A673 (cell line): ENCODE measurements at regions of chr21 and their contacts with region 1.

Region 1: GRCh38 chr21:42117229-42117966 is 46.3 kb downstream of the UMODL1 start:
- DNase-seq: peak; percentile 74
- H3K4me3 ChIP-seq: no peak overlapping the region
- H3K27ac ChIP-seq: no peak overlapping the region
- H3K4me1 ChIP-seq: peaks cover 4% of the 10 kb centered on the region
- H3K27me3 ChIP-seq: no peaks in the 10 kb centered on the region
- CTCF ChIP-seq: peak; percentile 91

Region 2: GRCh38 chr21:41283211-41283818 is 834.1 kb before region 1 on chr21:
- CTCF ChIA-PET with region 1: interaction called, 3 read pairs
- POLR2A ChIA-PET with region 1: no interaction called
- intact Hi-C with region 1: loop called (anchors 5 kb)
- DNase-seq: peak; percentile 70
- H3K4me3 ChIP-seq: no peak overlapping the region
- H3K27ac ChIP-seq: no peak overlapping the region
- H3K4me1 ChIP-seq: no peaks in the 10 kb centered on the region
- H3K27me3 ChIP-seq: peaks cover 4% of the 10 kb centered on the region
- CTCF ChIP-seq: peak; percentile 75

Region 3: GRCh38 chr21:41612674-41613532 is 504.5 kb before region 1 on chr21:
- CTCF ChIA-PET with region 1: interaction called, 11 read pairs
- POLR2A ChIA-PET with region 1: no interaction called
- intact Hi-C with region 1: loop called (anchors 2 kb)
- DNase-seq: peak; percentile 59
- H3K4me3 ChIP-seq: no peak overlapping the region
- H3K27ac ChIP-seq: no peak overlapping the region
- H3K4me1 ChIP-seq: peaks cover 8% of the 10 kb centered on the region
- H3K27me3 ChIP-seq: no peaks in the 10 kb centered on the region
- CTCF ChIP-seq: peak; percentile 80

Region 4: GRCh38 chr21:41631564-41632461 is 485.6 kb before region 1 on chr21:
- CTCF ChIA-PET with region 1: no interaction called
- POLR2A ChIA-PET with region 1: no interaction called
- intact Hi-C with region 1: no loop called
- DNase-seq: no peak
- H3K4me3 ChIP-seq: no peak overlapping the region
- H3K27ac ChIP-seq: no peak overlapping the region
- H3K4me1 ChIP-seq: no peaks in the 10 kb centered on the region
- H3K27me3 ChIP-seq: no peaks in the 10 kb centered on the region
- CTCF ChIP-seq: no peak

Region 5: DNA sequence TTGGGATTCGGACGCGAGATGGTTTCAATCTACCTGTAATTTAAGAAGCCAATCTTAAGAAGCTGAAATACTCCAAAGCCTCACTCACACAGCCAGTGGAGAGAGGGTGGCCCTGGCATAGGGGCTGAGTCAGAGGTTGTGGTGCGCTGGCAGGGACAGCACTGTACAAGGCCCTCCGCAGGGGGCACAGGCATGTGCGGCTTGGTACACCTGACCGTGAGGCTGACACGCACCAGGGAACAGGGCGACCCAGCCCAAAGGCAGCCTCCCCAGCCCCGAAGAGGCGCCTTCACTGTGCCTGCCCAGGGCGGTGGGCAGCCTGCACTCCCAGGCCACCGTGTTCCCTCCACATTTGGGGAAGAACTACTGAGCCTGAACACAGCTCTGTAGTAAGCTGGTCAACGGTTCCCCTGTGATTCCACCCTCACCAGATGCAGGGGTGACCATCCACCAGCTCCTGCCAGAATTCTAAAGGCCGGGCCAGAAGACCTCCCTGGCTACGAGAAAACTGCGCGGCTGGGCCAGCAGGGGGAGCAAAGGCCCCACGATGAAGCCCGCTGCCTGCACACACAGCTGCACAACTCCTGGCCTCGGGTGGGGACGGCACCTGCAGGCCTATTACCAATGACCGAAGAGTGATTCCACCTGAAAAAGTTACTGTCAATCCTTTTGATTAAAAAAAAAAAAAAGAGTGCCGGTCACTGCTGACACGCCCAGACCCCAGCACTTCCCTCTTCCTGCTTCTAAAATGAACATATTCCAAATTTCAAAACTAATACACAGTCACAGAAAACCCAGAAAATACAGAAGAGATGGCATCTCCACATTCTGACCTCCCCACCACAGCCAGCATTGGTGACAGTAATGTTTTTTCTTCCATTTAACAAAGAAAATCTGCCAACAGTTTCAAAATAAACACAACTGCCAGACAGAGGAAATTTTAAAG is 300.9 kb before region 1 on chr21:
- CTCF ChIA-PET with region 1: interaction called, 22 read pairs
- POLR2A ChIA-PET with region 1: no interaction called
- intact Hi-C with region 1: loop called (anchors 2 kb)
- DNase-seq: peak; percentile 66
- H3K4me3 ChIP-seq: no peak overlapping the region
- H3K27ac ChIP-seq: peak overlapping the region; percentile 56
- H3K4me1 ChIP-seq: peaks cover 19% of the 10 kb centered on the region
- H3K27me3 ChIP-seq: no peaks in the 10 kb centered on the region
- CTCF ChIP-seq: peak; percentile 87

Region 6: DNA sequence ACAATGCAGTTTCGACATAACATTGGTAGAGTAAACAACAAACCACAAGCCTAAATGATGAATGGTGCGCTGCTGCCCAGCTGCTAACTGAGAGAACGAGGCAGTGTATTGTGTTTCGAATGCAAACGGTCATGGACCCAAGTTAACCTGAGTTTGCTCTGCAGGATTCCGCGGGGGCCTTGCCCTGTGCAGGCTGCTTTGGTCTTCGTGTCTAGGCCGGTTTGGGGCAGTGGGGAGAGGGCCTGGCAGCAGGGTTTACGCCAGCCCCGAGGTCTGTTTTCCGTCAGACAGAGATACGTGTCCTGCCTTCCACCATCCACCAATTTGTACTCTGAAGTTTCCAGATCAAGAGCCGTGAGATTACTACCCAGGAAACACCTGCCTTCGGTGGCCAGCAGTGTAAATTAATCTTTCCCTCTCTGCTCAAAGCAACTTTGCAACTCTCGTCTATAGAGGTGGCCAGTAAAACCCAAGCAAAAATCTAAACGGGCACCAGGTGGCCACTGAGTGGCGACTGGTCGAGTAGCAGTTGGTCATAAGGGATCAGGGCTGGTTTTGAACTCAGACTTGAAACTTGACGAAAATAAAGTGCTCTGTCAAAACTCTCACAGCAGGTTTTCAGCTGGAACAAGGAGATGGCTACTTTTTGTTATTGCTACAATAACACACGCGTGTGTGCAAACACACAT is 231.9 kb before region 1 on chr21:
- CTCF ChIA-PET with region 1: no interaction called
- POLR2A ChIA-PET with region 1: no interaction called
- intact Hi-C with region 1: loop called (anchors 10 kb)
- DNase-seq: no peak
- H3K4me3 ChIP-seq: no peak overlapping the region
- H3K27ac ChIP-seq: no peak overlapping the region
- H3K4me1 ChIP-seq: no peaks in the 10 kb centered on the region
- H3K27me3 ChIP-seq: no peaks in the 10 kb centered on the region
- CTCF ChIP-seq: no peak

Region 7: DNA sequence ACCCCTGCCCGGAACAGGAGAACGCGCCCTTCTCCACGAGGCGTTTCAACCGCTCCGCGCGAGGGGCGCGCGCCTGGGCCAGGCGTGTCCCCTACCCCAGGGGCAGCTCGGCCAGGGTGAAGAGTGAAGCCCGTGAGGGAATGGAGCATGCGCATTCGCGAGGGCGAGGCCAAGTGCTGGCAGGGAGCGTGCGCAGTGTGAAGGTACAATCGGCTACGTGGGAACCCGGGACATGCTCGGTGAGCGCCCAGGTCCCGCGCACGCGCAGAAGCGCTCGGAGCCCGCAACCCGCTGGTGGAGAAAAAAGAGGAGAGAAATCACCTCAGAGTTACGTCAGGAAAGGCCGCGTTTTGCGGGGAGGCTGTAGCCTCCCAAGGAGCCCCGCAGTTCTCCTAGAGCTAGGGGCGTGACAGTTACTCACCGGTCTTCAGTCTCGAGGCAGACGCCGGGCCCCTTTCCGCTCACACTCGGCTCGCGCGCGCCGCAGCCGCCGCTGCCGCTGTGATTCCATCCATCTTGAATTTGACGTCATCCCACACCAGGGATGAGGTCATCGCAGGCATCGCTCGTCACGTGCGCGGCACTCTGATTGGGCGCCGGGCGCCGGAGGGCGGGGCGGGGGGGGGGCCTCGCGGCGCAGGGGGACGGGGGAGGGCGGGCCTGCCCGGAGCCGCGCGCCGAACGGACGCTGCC is 107.4 kb before region 1 on chr21 and contains the start of gene ZBTB21:
- CTCF ChIA-PET with region 1: no interaction called
- POLR2A ChIA-PET with region 1: no interaction called
- intact Hi-C with region 1: loop called (anchors 5 kb)
- DNase-seq: peak; percentile 98
- H3K4me3 ChIP-seq: peak within 1 kb of the TSS; percentile 89
- H3K27ac ChIP-seq: peak within 1 kb of the TSS; percentile 97
- H3K4me1 ChIP-seq: peaks cover 7% of the 10 kb centered on the region
- H3K27me3 ChIP-seq: no peaks in the 10 kb centered on the region
- CTCF ChIP-seq: no peak
- total RNA-seq, gene ZBTB21: 19.5 and 20.7 TPM in 2 replicates